ENCODE measurements at regions of chr12 and their contacts with region 1.

Region 1: GRCh38 chr12:116599285-116600136 is 40.3 kb downstream of the MAP1LC3B2 start:
- DNase-seq: peak; percentile 90
- ATAC-seq: peak; percentile 89

Region 2: GRCh38 chr12:115998119-115998633 is 601.3 kb before region 1 on chr12:
- intact Hi-C with region 1: loop called (anchors 10 kb)
- DNase-seq: no peak
- ATAC-seq: peak; percentile 69